ENCODE measurements at regions of chr7 and their contacts with region 1.

Region 1: GRCh38 chr7:73522105-73522872 is at the start of gene BAZ1B:
- DNase-seq: peak; percentile 98
- H3K4me3 ChIP-seq: peak within 1 kb of the TSS; percentile 88 to 94
- H3K27ac ChIP-seq: peak within 1 kb of the TSS; percentile 96 to 97
- H3K4me1 ChIP-seq: peaks cover 19% of the 10 kb centered on the region
- H3K27me3 ChIP-seq: no peaks in the 10 kb centered on the region
- CTCF ChIP-seq: peak in 1 of 3 experiments; percentile 2
- POLR2A ChIP-seq: no peak
- total RNA-seq, gene BAZ1B: 59.4 to 72.8 TPM

Region 2: DNA sequence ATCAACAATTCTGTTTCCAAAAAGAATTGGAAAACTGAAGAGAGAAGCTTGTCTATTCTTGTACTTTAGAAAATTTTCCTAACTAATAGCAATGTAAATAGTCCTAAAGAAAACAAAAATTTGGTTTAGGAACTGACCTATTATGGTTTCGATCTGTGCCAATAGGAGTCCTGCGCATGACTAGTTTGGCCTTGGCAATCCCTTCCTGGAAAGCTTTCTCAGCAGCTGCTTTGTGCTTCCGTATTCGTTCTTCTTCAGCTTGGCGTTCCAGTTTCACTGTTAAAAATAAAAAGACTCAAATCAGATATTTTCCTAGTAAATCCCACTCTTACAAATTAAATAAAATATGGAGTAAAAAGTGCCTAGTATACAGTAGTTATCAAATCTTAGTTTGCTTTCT is 52.1 kb before region 1 on chr7:
- intact Hi-C with region 1: no loop called
- DNase-seq: no peak
- H3K4me3 ChIP-seq: no peak overlapping the region
- H3K27ac ChIP-seq: peak overlapping the region in 1 of 2 donors; percentile 32
- H3K4me1 ChIP-seq: peaks cover 9% of the 10 kb centered on the region
- H3K27me3 ChIP-seq: no peaks in the 10 kb centered on the region
- CTCF ChIP-seq: no peak
- POLR2A ChIP-seq: no peak

Region 3: DNA sequence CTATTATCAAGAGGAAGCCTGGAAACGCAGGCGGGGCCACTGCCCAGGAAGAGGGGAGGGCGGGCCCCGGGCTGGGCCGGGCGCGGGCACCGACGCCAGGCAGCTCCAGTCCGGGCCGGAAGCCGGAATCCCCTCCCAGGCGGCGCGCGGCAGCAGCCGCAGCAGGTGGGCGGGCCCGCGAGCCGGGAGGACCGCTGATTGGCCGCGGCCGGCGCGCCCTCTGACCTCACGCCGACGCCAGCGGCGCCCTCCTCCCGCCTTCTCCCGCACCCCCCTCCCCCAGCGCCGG is 34.8 kb after region 1 on chr7:
- intact Hi-C with region 1: loop called (anchors 5 kb)
- DNase-seq: peak; percentile 95
- H3K4me3 ChIP-seq: peak overlapping the region; percentile 84 to 94
- H3K27ac ChIP-seq: peak overlapping the region; percentile 97 to 100
- H3K4me1 ChIP-seq: peaks cover 18% of the 10 kb centered on the region
- H3K27me3 ChIP-seq: no peaks in the 10 kb centered on the region
- CTCF ChIP-seq: no peak
- POLR2A ChIP-seq: no peak

Region 4: GRCh38 chr7:73660001-73660400 is 137.7 kb after region 1 on chr7:
- intact Hi-C with region 1: no loop called
- DNase-seq: no peak
- H3K4me3 ChIP-seq: no peak overlapping the region
- H3K27ac ChIP-seq: no peak overlapping the region
- H3K4me1 ChIP-seq: no peaks in the 10 kb centered on the region
- H3K27me3 ChIP-seq: no peaks in the 10 kb centered on the region
- CTCF ChIP-seq: no peak
- POLR2A ChIP-seq: no peak